PC-3 (cell line): ENCODE measurements at regions of chr3 and their contacts with region 1.

Region 1: GRCh38 chr3:134212906-134213665 is 37.6 kb downstream of the RYK start:
- DNase-seq: peak; percentile 86
- ATAC-seq: peak; percentile 96
- H3K4me3 ChIP-seq: no peak overlapping the region
- H3K27ac ChIP-seq: no peak overlapping the region
- H3K4me1 ChIP-seq: no peaks in the 10 kb centered on the region
- H3K27me3 ChIP-seq: no peaks in the 10 kb centered on the region
- CTCF ChIP-seq: peak; percentile 87

Region 2: DNA sequence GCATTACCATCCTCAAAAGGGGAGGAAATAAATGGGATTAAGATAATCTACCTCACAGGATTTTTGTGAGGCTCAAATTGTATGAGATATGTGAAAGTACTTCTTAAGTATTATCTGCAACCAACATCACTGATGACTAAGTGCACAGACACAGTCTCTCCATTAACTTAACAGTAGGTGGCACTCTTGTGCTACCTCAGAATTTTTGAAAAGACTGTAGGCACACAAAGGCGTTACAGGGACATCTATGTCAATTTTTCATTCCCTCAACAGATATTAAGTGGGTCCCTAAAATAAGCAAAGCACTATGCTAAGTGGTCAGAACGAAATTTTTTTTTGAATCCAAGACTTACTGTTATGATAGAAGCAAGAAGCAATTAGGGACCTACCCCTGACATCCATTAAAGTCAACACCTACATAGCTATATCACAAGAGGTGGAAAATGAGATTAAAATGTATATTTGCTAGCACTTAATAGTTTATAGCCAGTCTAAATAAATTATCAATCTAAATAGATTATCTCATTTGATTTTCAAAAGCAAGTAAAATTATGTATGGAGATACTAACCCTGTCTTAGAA is 15.3 kb before region 1 on chr3:
- CTCF ChIA-PET with region 1: interaction called, 6 read pairs
- POLR2A ChIA-PET with region 1: no interaction called
- intact Hi-C with region 1: loop called (anchors 1 kb)
- DNase-seq: peak; percentile 72
- ATAC-seq: peak; percentile 48
- H3K4me3 ChIP-seq: no peak overlapping the region
- H3K27ac ChIP-seq: no peak overlapping the region
- H3K4me1 ChIP-seq: peaks cover 20% of the 10 kb centered on the region
- H3K27me3 ChIP-seq: no peaks in the 10 kb centered on the region
- CTCF ChIP-seq: peak; percentile 77

Region 3: GRCh38 chr3:134250717-134251220 is 37.7 kb after region 1 on chr3 and contains the start of gene RYK:
- CTCF ChIA-PET with region 1: no interaction called
- POLR2A ChIA-PET with region 1: interaction called, 7 read pairs
- intact Hi-C with region 1: loop called (anchors 2 kb)
- DNase-seq: peak; percentile 81
- ATAC-seq: peak; percentile 81
- H3K4me3 ChIP-seq: peak within 1 kb of the TSS; percentile 96
- H3K27ac ChIP-seq: peak within 1 kb of the TSS; percentile 36; the same call in 1 of the 2 replicates
- H3K4me1 ChIP-seq: peaks cover 6% of the 10 kb centered on the region; the same call in 1 of the 2 replicates
- H3K27me3 ChIP-seq: no peaks in the 10 kb centered on the region
- CTCF ChIP-seq: no peak
- total RNA-seq, gene RYK: 44.1 and 47.2 TPM in 2 replicates

Region 4: GRCh38 chr3:134299185-134299887 is 86.2 kb after region 1 on chr3:
- CTCF ChIA-PET with region 1: no interaction called
- POLR2A ChIA-PET with region 1: no interaction called
- intact Hi-C with region 1: loop called (anchors 1 kb)
- DNase-seq: peak; percentile 43
- ATAC-seq: peak; percentile 74
- H3K4me3 ChIP-seq: no peak overlapping the region
- H3K27ac ChIP-seq: no peak overlapping the region
- H3K4me1 ChIP-seq: no peaks in the 10 kb centered on the region
- H3K27me3 ChIP-seq: no peaks in the 10 kb centered on the region
- CTCF ChIP-seq: peak; percentile 35; the same call in 1 of the 2 replicates

Region 5: DNA sequence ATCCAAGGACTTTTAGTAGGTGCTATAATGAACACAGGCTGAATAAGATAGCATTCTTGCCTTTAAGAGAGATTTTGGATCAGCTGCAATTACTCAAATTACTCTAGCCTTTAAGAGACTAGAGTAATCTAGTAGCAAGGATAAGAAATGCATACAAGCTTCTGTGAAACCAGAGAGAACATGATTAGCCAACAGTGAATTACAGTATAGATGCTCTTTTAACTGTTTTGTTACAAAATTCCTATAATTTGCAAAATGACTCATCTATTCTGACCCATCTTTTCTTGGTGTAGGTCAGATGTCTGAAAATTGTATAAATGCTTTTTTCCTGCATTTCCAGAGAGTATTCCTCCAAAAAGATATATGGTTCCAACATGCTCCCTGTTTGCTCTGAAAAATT is 339.7 kb after region 1 on chr3:
- CTCF ChIA-PET with region 1: no interaction called
- POLR2A ChIA-PET with region 1: no interaction called
- intact Hi-C with region 1: no loop called
- DNase-seq: no peak
- ATAC-seq: no peak
- H3K4me3 ChIP-seq: no peak overlapping the region
- H3K27ac ChIP-seq: no peak overlapping the region
- H3K4me1 ChIP-seq: no peaks in the 10 kb centered on the region
- H3K27me3 ChIP-seq: no peaks in the 10 kb centered on the region
- CTCF ChIP-seq: no peak